Calu3 (cell line): ENCODE measurements at regions of chr12 and their contacts with region 1.

Region 1: DNA sequence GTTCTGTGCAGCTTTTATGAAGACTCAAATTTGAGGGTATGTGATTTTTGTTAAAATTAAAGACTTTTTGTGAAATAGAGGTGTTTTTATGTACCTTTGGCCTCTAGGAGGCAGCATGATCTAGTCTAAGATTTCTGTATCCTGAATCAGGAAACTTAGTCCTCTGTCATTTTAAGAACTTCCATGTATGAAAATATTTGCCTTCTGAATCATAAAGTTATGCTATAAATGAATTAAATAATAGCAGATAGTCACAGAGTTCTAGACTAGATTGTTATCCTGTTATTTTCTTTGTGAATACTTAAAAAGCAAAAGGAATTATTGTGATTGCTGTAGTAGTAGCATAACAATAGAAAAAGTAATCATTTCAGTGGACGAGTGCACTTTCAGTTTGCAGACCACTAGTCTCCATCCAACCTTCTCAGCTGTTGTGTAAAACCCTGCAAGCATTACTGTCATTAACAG is 56.3 kb downstream of the FGD4 start:
- DNase-seq: peak; percentile 46
- H3K4me3 Mint-ChIP-seq: no peak overlapping the region
- H3K27ac Mint-ChIP-seq: no peak overlapping the region
- H3K4me1 Mint-ChIP-seq: peaks cover 36% of the 10 kb centered on the region
- H3K27me3 Mint-ChIP-seq: no peaks in the 10 kb centered on the region
- CTCF ChIP-seq: no peak

Region 2: DNA sequence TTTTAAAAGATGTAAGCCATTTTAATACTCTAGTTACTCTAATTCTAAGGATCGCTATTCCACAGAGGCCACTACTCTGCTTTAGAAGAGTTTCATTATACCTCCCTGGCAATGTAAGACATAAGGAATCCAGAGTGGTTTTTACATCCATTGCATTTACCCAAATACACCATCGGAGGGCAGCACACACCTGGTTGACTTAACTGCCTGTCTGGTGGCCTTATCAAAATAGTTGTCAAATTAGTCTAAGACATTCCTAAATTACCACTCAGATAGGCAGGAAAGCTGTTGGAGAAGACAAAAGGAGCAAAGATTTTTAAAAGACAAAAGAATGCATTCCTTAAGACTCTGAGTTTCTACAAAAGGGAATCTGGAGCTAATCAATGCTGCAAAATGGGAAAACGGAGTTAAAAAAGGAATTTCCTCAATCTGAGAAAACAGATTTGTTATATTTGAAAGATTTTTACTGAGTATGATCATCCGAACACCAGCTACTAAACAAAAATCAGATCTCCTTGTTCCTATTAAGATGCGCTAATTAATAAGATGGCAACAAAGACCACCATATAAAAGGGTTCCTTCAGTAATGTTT is 90.1 kb before region 1 on chr12:
- CTCF ChIA-PET with region 1: no interaction called
- intact Hi-C with region 1: loop called (anchors 1 kb)
- DNase-seq: peak; percentile 68
- H3K4me3 Mint-ChIP-seq: no peak overlapping the region
- H3K27ac Mint-ChIP-seq: peak overlapping the region; percentile 23
- H3K4me1 Mint-ChIP-seq: peaks cover 17% of the 10 kb centered on the region
- H3K27me3 Mint-ChIP-seq: no peaks in the 10 kb centered on the region
- CTCF ChIP-seq: peak; percentile 47

Region 3: GRCh38 chr12:32501835-32502333 is 46.2 kb after region 1 on chr12:
- CTCF ChIA-PET with region 1: no interaction called
- intact Hi-C with region 1: loop called (anchors 5 kb)
- DNase-seq: peak; percentile 72
- H3K4me3 Mint-ChIP-seq: peak overlapping the region; percentile 51
- H3K27ac Mint-ChIP-seq: peak overlapping the region; percentile 66
- H3K4me1 Mint-ChIP-seq: peaks cover 46% of the 10 kb centered on the region
- H3K27me3 Mint-ChIP-seq: no peaks in the 10 kb centered on the region
- CTCF ChIP-seq: no peak

Region 4: GRCh38 chr12:32568241-32568640 is 112.6 kb after region 1 on chr12:
- CTCF ChIA-PET with region 1: interaction called, 3 read pairs
- intact Hi-C with region 1: loop called (anchors 2 kb)
- DNase-seq: no peak
- H3K4me3 Mint-ChIP-seq: no peak overlapping the region
- H3K27ac Mint-ChIP-seq: no peak overlapping the region
- H3K4me1 Mint-ChIP-seq: peaks cover 51% of the 10 kb centered on the region
- H3K27me3 Mint-ChIP-seq: no peaks in the 10 kb centered on the region
- CTCF ChIP-seq: no peak

Region 5: DNA sequence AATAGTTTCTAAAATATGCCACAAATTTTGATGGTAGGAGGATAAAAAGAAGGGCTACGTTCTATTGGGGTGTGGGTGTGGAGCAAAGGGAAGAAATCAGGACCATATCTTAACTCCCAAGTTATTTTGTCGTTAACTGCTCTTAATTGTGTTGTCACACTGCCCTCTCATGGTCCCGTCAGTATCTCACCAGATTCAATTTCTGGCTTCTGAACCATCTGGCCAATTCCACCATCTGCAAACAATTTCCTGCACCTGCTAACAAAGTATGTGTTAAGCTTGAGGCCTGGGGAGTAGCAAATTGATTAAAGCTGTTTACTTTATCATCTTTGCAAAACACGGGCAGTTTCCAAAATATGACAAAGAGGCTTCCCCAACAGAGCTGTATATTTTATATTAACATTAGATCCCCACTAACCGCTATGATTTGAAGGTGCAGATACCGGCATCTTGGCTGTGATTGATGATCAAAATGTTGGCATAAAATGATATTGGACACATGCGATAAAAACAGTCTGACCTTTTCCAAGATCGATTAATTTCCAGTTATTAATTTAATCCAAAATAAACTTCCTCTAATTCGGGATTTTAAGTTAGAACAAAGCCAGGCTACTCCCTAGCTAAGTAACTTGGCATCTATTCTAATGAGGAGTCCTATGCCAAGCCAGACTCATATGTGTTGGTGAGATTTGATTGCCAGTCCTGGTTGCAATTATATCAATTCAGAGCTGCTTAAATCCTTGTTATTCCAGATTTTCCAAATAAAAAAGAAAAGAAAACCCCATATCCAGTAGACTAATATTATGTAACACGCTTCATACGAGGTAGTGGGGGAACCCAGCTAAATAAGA is 216.5 kb after region 1 on chr12:
- CTCF ChIA-PET with region 1: interaction called, 3 read pairs
- intact Hi-C with region 1: loop called (anchors 1 kb)
- DNase-seq: peak; percentile 48
- H3K4me3 Mint-ChIP-seq: no peak overlapping the region
- H3K27ac Mint-ChIP-seq: no peak overlapping the region
- H3K4me1 Mint-ChIP-seq: no peaks in the 10 kb centered on the region
- H3K27me3 Mint-ChIP-seq: no peaks in the 10 kb centered on the region
- CTCF ChIP-seq: peak; percentile 51